T-cell (primary cell): ENCODE measurements at regions of chrX and their contacts with region 1.

Region 1: DNA sequence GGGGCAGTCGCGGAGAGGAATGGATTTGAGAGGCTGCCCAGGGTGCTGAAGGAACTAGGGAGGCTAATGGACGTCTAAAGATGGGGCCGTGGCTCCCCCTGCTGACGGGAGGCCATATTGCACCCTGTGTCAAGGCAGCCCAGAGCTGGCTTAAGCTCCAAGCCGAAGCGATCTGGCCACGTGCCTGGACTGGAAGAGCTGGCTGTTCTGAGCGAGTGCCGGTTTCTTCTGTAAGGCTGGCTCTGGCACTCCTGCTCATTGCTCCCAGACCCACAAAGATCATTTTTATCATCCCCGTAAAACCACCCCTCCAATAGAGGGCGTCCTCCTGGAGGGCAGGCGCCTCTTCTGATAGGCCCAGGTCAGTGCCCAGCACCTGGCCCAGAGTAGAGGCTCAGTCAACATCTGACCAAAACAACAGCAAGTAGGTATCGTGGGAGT is 5.6 kb downstream of the PNCK start:
- DNase-seq: peak in 34 of 35 experiments; percentile 25 to 84 (median 63)
- ATAC-seq: peak; percentile 73 to 86 (median 78)
- H3K4me3 ChIP-seq: no peak overlapping the region
- H3K4me3 Mint-ChIP-seq: peak overlapping the region; percentile 47 to 65 (median 49)
- H3K27ac ChIP-seq: no peak overlapping the region
- H3K27ac Mint-ChIP-seq: no peak overlapping the region
- H3K4me1 ChIP-seq: peaks cover 0 to 19% of the 10 kb centered on the region in 2 experiments
- H3K4me1 Mint-ChIP-seq: peaks cover 5 to 10% (median 8%) of the 10 kb centered on the region in 3 donors
- H3K27me3 ChIP-seq: peaks cover 0 to 37% of the 10 kb centered on the region in 2 experiments
- H3K27me3 Mint-ChIP-seq: peaks cover 17 to 32% of the 10 kb centered on the region in 2 donors

Region 2: DNA sequence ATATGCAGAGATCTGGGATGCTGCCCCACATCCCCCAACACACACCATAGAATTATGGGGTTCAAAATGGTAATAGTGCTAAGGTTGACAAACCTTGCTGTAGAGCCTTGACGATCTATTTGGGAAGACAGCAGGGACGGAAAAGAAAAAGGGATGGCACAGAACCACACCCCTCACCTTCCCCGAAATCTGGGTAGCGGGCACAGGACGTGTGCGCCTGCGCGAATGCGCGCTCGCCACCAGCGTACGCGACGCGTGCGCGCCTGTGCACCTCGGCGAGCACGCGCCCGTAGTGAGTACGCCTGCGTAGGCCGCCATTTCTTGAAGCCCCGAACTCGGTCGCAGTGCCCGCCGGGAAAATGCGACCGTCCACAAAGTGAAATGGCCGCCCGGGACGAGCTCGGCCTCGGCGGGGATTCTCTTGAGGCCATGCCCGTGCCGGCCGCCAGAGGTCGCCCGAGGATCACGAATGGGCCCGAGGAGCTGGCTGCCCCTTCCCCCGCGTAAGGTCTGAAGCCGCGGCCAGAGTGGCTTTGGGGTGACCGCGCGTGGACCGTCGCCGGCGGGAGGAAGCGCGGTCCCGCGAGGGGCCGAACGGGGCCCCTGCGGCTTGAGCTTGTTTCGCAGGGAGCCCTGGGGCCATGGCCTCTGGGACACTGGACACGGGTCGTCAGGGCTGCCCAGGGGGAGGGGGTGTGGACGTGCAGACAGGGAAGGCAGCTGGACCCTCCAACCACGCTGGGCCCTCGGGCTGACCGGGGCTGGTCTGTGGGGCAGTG is 726.5 kb before region 1 on chrX:
- CTCF ChIA-PET with region 1: interaction called, 10 to 13 read pairs
- POLR2A ChIA-PET with region 1: interaction called in 1 of 2 experiments, 10 read pairs
- DNase-seq: peak; percentile 79 to 93 (median 86)
- ATAC-seq: peak; percentile 90 to 97 (median 96)
- H3K4me3 ChIP-seq: peak overlapping the region; percentile 38 to 54
- H3K4me3 Mint-ChIP-seq: peak overlapping the region; percentile 78 to 86 (median 79)
- H3K27ac ChIP-seq: peak overlapping the region; percentile 81
- H3K27ac Mint-ChIP-seq: peak overlapping the region; percentile 88 to 91
- H3K4me1 ChIP-seq: peaks cover 0 to 11% of the 10 kb centered on the region in 2 experiments
- H3K4me1 Mint-ChIP-seq: peaks cover 0 to 10% (median 10%) of the 10 kb centered on the region in 3 donors
- H3K27me3 ChIP-seq: no peaks in the 10 kb centered on the region
- H3K27me3 Mint-ChIP-seq: peaks cover 0 to 26% of the 10 kb centered on the region in 2 donors

Region 3: GRCh38 chrX:153539171-153539978 is 128.6 kb before region 1 on chrX:
- CTCF ChIA-PET with region 1: interaction called, 8 to 24 read pairs
- POLR2A ChIA-PET with region 1: no interaction called
- DNase-seq: peak in 33 of 35 experiments; percentile 6 to 68 (median 36)
- ATAC-seq: peak; percentile 78 to 86 (median 84)
- H3K4me3 ChIP-seq: no peak overlapping the region
- H3K4me3 Mint-ChIP-seq: no peak overlapping the region
- H3K27ac ChIP-seq: no peak overlapping the region
- H3K27ac Mint-ChIP-seq: no peak overlapping the region
- H3K4me1 ChIP-seq: peaks cover 0 to 3% of the 10 kb centered on the region in 2 experiments
- H3K4me1 Mint-ChIP-seq: no peaks in the 10 kb centered on the region
- H3K27me3 ChIP-seq: peaks cover 0 to 8% of the 10 kb centered on the region in 2 experiments
- H3K27me3 Mint-ChIP-seq: peaks cover 2 to 3% of the 10 kb centered on the region in 2 donors

Region 4: GRCh38 chrX:153564051-153564736 is 103.8 kb before region 1 on chrX:
- CTCF ChIA-PET with region 1: no interaction called
- POLR2A ChIA-PET with region 1: no interaction called
- DNase-seq: no peak
- ATAC-seq: no peak
- H3K4me3 ChIP-seq: no peak overlapping the region
- H3K4me3 Mint-ChIP-seq: no peak overlapping the region
- H3K27ac ChIP-seq: no peak overlapping the region
- H3K27ac Mint-ChIP-seq: no peak overlapping the region
- H3K4me1 ChIP-seq: peaks cover 0 to 6% of the 10 kb centered on the region in 2 experiments
- H3K4me1 Mint-ChIP-seq: no peaks in the 10 kb centered on the region
- H3K27me3 ChIP-seq: peaks cover 0 to 7% of the 10 kb centered on the region in 2 experiments
- H3K27me3 Mint-ChIP-seq: peaks cover 0 to under 1% of the 10 kb centered on the region in 2 donors

Region 5: DNA sequence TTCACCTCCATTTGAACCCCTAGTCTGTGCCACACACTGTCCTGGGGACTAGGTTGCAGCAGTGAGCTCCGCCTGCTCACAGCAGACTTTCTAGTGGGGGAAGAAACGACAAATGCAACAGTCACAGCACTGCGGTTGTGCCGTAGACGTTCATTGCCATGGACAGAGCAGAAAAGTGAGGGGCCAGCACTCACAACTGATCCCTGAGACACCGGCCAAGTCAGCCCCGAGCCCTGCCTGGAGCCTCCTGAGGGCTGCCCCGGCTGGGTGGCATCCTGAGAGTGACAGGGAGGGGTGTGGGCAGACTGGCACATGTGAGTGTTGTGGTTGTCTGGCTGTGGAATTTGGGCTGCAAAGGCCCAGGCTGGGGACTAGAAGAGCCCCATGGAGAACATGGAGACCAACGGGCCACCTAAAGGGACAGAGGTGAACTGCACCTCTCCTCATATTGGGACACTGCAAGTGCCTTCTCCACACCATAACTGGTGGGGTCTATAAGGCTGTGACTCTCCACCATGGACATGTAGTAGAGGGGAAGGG is 16.4 kb before region 1 on chrX:
- CTCF ChIA-PET with region 1: interaction called in 1 of 2 experiments, 3 read pairs
- POLR2A ChIA-PET with region 1: interaction called in 1 of 2 experiments, 10 read pairs
- DNase-seq: peak in 1 of 35 experiments; percentile 8
- ATAC-seq: peak in 1 of 4 experiments; percentile 52
- H3K4me3 ChIP-seq: no peak overlapping the region
- H3K4me3 Mint-ChIP-seq: no peak overlapping the region
- H3K27ac ChIP-seq: no peak overlapping the region
- H3K27ac Mint-ChIP-seq: no peak overlapping the region
- H3K4me1 ChIP-seq: peaks cover 0 to 12% of the 10 kb centered on the region in 2 experiments
- H3K4me1 Mint-ChIP-seq: peaks cover 0 to 2% (median 1%) of the 10 kb centered on the region in 3 donors
- H3K27me3 ChIP-seq: peaks cover 0 to 27% of the 10 kb centered on the region in 2 experiments
- H3K27me3 Mint-ChIP-seq: peaks cover 8 to 14% of the 10 kb centered on the region in 2 donors

Region 6: GRCh38 chrX:153724252-153725040 is 56.5 kb after region 1 on chrX and contains the starts of genes ABCD1 and BCAP31:
- CTCF ChIA-PET with region 1: no interaction called
- POLR2A ChIA-PET with region 1: no interaction called
- DNase-seq: peak; percentile 75 to 92 (median 84)
- ATAC-seq: peak; percentile 75 to 81 (median 80)
- H3K4me3 ChIP-seq: peak within 1 kb of the TSS; percentile 65 to 72
- H3K4me3 Mint-ChIP-seq: peak within 1 kb of the TSS; percentile 80 to 85 (median 82)
- H3K27ac ChIP-seq: peak within 1 kb of the TSS; percentile 74
- H3K27ac Mint-ChIP-seq: peak within 1 kb of the TSS; percentile 80 to 81
- H3K4me1 ChIP-seq: peaks cover 7 to 58% of the 10 kb centered on the region in 2 experiments
- H3K4me1 Mint-ChIP-seq: peaks cover 18 to 47% (median 33%) of the 10 kb centered on the region in 3 donors
- H3K27me3 ChIP-seq: no peaks in the 10 kb centered on the region
- H3K27me3 Mint-ChIP-seq: peaks cover 0 to 5% of the 10 kb centered on the region in 2 donors
- total RNA-seq, gene ABCD1: 6.9 to 10.7 (median 7.9) TPM
- total RNA-seq, gene BCAP31: 90.1 to 124 (median 107) TPM

Region 7: GRCh38 chrX:153947009-153947769 is 279.2 kb after region 1 on chrX:
- CTCF ChIA-PET with region 1: interaction called in 1 of 2 experiments, 11 read pairs
- POLR2A ChIA-PET with region 1: no interaction called
- DNase-seq: peak; percentile 49 to 85 (median 70)
- ATAC-seq: peak; percentile 79 to 85 (median 82)
- H3K4me3 ChIP-seq: no peak overlapping the region
- H3K4me3 Mint-ChIP-seq: peak overlapping the region in 1 of 3 donors; percentile 52
- H3K27ac ChIP-seq: no peak overlapping the region
- H3K27ac Mint-ChIP-seq: peak overlapping the region; percentile 71 to 90
- H3K4me1 ChIP-seq: peaks cover 5 to 63% of the 10 kb centered on the region in 2 experiments
- H3K4me1 Mint-ChIP-seq: peaks cover 19 to 23% (median 20%) of the 10 kb centered on the region in 3 donors
- H3K27me3 ChIP-seq: no peaks in the 10 kb centered on the region
- H3K27me3 Mint-ChIP-seq: no peaks in the 10 kb centered on the region